ENCODE measurements at regions of chr12 and their contacts with region 1.

Region 1: DNA sequence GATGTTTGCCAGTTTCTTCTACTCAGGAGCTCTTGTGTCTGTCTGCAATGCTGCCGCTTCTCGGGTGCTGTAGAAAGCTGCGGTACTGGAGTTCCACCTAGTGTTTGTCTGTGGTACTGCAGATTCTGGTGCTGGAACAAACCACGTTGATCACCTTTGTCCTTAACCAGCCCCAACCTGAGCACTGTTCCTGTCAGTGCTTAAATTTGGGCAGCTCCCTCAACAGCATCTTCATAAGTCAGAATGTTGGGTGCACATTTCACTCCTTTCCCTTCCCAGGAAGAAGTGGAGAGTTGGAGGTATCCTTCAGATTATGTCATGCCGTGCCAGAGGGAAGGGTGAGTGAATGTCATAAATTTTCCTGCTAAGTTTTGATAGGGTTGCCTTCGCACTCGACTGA is 48.7 kb upstream of the LALBA start:
- ATAC-seq: peak; percentile 76 to 91 (median 86)
- H3K4me3 ChIP-seq: no peak overlapping the region
- H3K27ac ChIP-seq: no peak overlapping the region
- H3K4me1 ChIP-seq: no peaks in the 10 kb centered on the region

Region 2: GRCh38 chr12:47949441-47950308 is 668.9 kb before region 1 on chr12:
- in situ Hi-C with region 1: loop called in 1 of 9 experiments (anchors 25 kb)
- ATAC-seq: peak; percentile 75 to 97 (median 80)
- H3K4me3 ChIP-seq: no peak overlapping the region
- H3K27ac ChIP-seq: no peak overlapping the region
- H3K4me1 ChIP-seq: no peaks in the 10 kb centered on the region

Region 3: GRCh38 chr12:48263617-48264016 is 354.9 kb before region 1 on chr12:
- in situ Hi-C with region 1: loop called in 1 of 9 experiments (anchors 25 kb)
- ATAC-seq: no peak
- H3K4me3 ChIP-seq: no peak overlapping the region
- H3K27ac ChIP-seq: no peak overlapping the region
- H3K4me1 ChIP-seq: no peaks in the 10 kb centered on the region

Measured in motor neuron (in vitro differentiated cells).